Endothelial cell of umbilical vein (primary cell): ENCODE measurements at regions of chr2 and their contacts with region 1.

Region 1: GRCh38 chr2:44361330-44362206 is at the starts of genes CAMKMT and PREPL:
- DNase-seq: peak; percentile 97
- H3K4me3 ChIP-seq: peak within 1 kb of the TSS; percentile 59 to 89 (median 86)
- H3K27ac ChIP-seq: peak within 1 kb of the TSS; percentile 99
- H3K4me1 ChIP-seq: peaks cover 24% of the 10 kb centered on the region
- H3K27me3 ChIP-seq: no peaks in the 10 kb centered on the region
- CTCF ChIP-seq: no peak
- POLR2A ChIP-seq: peak; percentile 82
- total RNA-seq, gene CAMKMT: 8.2 and 10.7 TPM in 2 replicates
- total RNA-seq, gene PREPL: 25.7 and 26.0 TPM in 2 replicates

Region 2: GRCh38 chr2:44087036-44087713 is 274.4 kb before region 1 on chr2:
- CTCF ChIA-PET with region 1: no interaction called
- POLR2A ChIA-PET with region 1: no interaction called
- dilution Hi-C with region 1: no loop called
- intact Hi-C with region 1: loop called (anchors 1 kb)
- DNase-seq: peak; percentile 85
- H3K4me3 ChIP-seq: peak overlapping the region in 2 of 3 experiments; percentile 15 to 45
- H3K27ac ChIP-seq: no peak overlapping the region
- H3K4me1 ChIP-seq: peaks cover 4% of the 10 kb centered on the region
- H3K27me3 ChIP-seq: peaks cover 19 to 27% of the 10 kb centered on the region in 2 experiments
- CTCF ChIP-seq: peak; percentile 92 to 95
- POLR2A ChIP-seq: no peak

Region 3: GRCh38 chr2:44233450-44234128 is 128.0 kb before region 1 on chr2:
- CTCF ChIA-PET with region 1: no interaction called
- POLR2A ChIA-PET with region 1: no interaction called
- dilution Hi-C with region 1: no loop called
- intact Hi-C with region 1: loop called (anchors 5 kb)
- DNase-seq: peak; percentile 82
- H3K4me3 ChIP-seq: no peak overlapping the region
- H3K27ac ChIP-seq: peak overlapping the region; percentile 35
- H3K4me1 ChIP-seq: peaks cover 21% of the 10 kb centered on the region
- H3K27me3 ChIP-seq: no peaks in the 10 kb centered on the region
- CTCF ChIP-seq: no peak
- POLR2A ChIP-seq: no peak

Region 4: GRCh38 chr2:44802777-44803424 is 441.3 kb after region 1 on chr2:
- CTCF ChIA-PET with region 1: no interaction called
- POLR2A ChIA-PET with region 1: no interaction called
- dilution Hi-C with region 1: no loop called
- intact Hi-C with region 1: loop called (anchors 10 kb)
- DNase-seq: no peak
- H3K4me3 ChIP-seq: peak overlapping the region in 1 of 3 experiments; percentile 64
- H3K27ac ChIP-seq: no peak overlapping the region
- H3K4me1 ChIP-seq: peaks cover 17% of the 10 kb centered on the region
- H3K27me3 ChIP-seq: peaks cover 68 to 95% of the 10 kb centered on the region in 2 experiments
- CTCF ChIP-seq: no peak
- POLR2A ChIP-seq: no peak

Region 5: DNA sequence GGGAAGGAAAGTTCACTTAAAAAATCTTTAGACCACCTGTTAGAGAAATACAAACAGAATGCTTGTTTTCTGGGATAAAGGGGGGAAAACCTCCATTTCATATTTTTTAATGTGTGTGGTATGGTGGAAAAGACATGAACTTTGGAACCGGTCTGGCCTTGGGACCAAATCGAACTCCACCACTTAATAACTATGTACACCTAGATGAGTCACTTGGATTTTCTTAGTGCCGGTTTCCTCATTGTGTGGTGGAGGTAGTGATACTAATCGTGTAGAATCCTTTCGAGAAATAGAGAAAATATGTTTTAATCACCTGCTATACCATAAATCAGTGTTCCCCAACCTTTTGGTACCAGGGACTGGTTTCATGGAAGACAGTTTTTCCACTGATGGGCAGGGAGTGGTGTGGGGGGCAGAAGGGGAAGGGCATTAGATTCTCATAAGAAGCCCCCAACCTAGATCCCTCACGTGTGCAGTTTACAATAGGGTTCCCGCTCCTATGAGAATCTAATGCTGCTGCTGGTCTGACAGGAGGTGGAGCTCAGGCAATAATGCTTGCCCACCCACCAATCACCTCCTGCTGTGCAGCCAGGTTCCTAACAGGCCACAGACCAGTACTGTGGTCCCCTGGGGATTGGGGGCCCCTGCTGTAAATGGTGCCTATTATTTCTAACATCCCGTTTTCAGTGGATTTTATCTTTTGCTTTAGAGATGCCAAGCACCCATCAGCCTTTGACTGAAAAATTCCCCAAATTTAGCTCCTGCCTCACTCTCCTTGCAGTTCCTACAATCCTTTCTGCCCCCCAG is 1598.7 kb after region 1 on chr2:
- CTCF ChIA-PET with region 1: no interaction called
- POLR2A ChIA-PET with region 1: no interaction called
- dilution Hi-C with region 1: no loop called
- intact Hi-C with region 1: no loop called
- DNase-seq: no peak
- H3K4me3 ChIP-seq: no peak overlapping the region
- H3K27ac ChIP-seq: no peak overlapping the region
- H3K4me1 ChIP-seq: peaks cover 27% of the 10 kb centered on the region
- H3K27me3 ChIP-seq: no peaks in the 10 kb centered on the region
- CTCF ChIP-seq: no peak
- POLR2A ChIP-seq: no peak